ENCODE measurements at regions of chr9 and their contacts with region 1.

Region 1: DNA sequence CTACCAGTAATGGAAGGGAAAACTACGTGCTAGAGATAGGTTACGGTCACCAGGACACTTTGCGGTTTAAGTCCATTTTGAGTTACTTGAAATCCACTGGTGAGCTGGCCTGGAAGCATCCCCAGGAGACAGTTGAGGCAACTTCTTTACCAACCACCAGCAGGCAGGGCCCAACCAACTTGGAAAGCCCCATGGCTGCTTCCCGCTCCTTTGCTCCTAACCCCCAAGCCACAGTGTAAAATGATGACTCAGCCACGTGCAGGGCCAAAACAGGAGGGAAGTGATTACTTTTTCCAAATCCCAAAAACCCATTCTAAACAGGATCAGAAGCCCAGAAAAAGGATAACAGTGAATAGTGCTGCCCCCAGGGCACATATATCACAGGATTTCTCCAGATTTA is 87.4 kb downstream of the PAX5 start:
- DNase-seq: no peak
- ATAC-seq: no peak
- H3K4me3 ChIP-seq: no peak overlapping the region
- H3K27ac ChIP-seq: no peak overlapping the region
- H3K4me1 ChIP-seq: peaks cover 0 to 4% of the 10 kb centered on the region in 2 donors
- H3K27me3 ChIP-seq: no peaks in the 10 kb centered on the region
- CTCF ChIP-seq: no peak
- POLR2A ChIP-seq: no peak

Region 2: GRCh38 chr9:36891341-36891959 is 55.2 kb before region 1 on chr9:
- in situ Hi-C with region 1: loop called in 1 of 4 experiments (anchors 10 kb)
- intact Hi-C with region 1: no loop called
- DNase-seq: no peak
- ATAC-seq: no peak
- H3K4me3 ChIP-seq: no peak overlapping the region
- H3K27ac ChIP-seq: no peak overlapping the region
- H3K4me1 ChIP-seq: peaks cover 0 to 14% of the 10 kb centered on the region in 2 donors
- H3K27me3 ChIP-seq: no peaks in the 10 kb centered on the region
- CTCF ChIP-seq: no peak
- POLR2A ChIP-seq: no peak

Region 3: GRCh38 chr9:37004424-37004935 is 57.8 kb after region 1 on chr9:
- in situ Hi-C with region 1: loop called in 1 of 4 experiments (anchors 10 kb)
- intact Hi-C with region 1: no loop called
- DNase-seq: no peak
- ATAC-seq: no peak
- H3K4me3 ChIP-seq: no peak overlapping the region
- H3K27ac ChIP-seq: no peak overlapping the region
- H3K4me1 ChIP-seq: no peaks in the 10 kb centered on the region
- H3K27me3 ChIP-seq: peaks cover 41 to 70% (median 52%) of the 10 kb centered on the region in 3 donors
- CTCF ChIP-seq: no peak
- POLR2A ChIP-seq: no peak